Psoas muscle (tissue), 8 donors: ENCODE measurements at regions of chrX and their contacts with region 1.

Region 1: GRCh38 chrX:72126539-72127140 is 5.1 kb downstream of the RTL5 start:
- DNase-seq: peak; percentile 83 to 89
- ATAC-seq: peak; percentile 88 to 93 (median 90)
- H3K4me3 ChIP-seq: no peak overlapping the region
- H3K27ac ChIP-seq: peak overlapping the region; percentile 41
- H3K4me1 ChIP-seq: peaks cover 3% of the 10 kb centered on the region
- H3K27me3 ChIP-seq: peaks cover 0 to 48% (median 0%) of the 10 kb centered on the region in 3 donors
- CTCF ChIP-seq: peak; percentile 80

Region 2: DNA sequence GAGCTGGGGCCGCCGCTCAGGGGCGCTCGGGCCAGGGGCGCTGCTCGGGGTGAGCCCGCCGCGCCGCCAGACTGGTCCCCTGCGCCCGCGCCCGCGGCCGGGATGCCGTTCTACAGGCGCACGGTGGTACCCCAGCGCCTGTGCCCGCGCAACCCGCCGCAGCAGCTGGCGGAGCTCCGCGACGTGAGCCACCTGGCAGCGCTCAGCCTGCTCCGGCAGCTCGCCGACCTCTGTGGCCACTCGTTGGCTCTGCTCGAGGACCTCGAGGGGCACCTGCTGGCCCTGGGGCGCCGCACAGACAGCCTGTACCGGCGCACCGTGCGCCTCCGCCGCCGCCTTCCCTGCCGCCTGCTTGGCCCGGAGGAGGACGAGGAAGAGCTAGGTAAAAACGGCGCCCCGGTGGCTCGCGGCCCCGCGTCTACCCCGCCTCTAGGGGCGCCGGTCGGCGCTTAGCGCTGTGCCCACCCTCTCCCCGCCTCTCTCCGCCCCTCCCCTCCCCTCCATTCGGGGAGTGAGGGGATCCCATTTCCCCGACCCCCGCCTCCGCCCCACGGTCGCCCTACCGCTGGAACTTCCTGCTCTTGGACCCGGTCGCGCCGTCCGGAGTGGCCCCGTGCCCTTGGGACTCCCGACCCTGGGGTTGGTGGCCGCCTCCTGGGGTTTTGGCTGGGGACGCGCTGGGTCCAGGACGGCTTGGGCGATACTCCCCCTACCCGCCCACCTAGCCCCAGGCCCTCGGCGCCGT is 215.5 kb before region 1 on chrX:
- intact Hi-C with region 1: loop called in 1 of 2 experiments (anchors 2 kb)
- DNase-seq: peak in 1 of 2 donors; percentile 21
- ATAC-seq: peak; percentile 37 to 83 (median 61)
- H3K4me3 ChIP-seq: peak overlapping the region; percentile 55
- H3K27ac ChIP-seq: no peak overlapping the region
- H3K4me1 ChIP-seq: no peaks in the 10 kb centered on the region
- H3K27me3 ChIP-seq: peaks cover 0 to 51% (median 0%) of the 10 kb centered on the region in 3 donors
- CTCF ChIP-seq: peak; percentile 16

Region 3: DNA sequence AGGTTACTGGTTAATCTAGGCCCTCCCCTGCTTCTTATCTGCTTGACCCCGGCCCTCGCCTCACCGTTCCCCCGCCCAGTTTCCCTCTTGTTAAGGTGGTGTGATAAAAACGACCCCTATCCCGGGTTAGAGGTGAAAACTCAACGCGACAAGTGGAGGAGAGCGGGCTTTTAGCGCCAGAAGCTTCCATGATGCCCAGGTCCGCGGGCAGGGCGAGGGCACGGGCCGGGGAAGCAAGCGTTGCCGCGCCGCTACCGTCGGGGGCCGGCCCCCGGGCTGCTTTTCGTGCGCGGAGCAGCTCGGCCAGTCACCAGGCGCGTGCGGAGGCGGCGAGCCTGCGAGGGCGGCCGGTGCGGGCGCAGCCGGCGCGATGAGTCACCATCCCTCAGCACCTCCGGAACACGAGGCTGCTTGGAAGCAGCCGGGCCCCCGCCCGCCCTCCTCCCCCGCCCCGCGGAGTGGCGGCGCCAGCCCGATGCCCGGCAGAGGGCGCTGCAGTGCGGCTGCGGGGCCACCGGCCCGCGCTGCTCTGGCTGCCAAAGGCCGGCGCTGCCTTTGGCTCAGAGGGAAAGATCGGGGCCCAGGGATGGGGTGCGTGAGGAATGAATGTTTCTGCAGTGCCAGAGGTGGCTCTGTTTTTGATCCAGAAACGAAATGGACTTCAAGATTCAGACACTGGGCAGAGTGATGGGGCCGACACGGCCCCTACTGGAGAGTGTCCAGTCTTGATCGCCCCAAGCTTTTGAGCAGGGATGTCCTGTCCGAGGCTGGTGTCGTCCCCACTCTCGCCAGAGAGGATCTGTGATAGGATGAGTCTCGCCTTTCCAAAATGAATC is 108.1 kb before region 1 on chrX:
- intact Hi-C with region 1: loop called (anchors 1 to 5 kb)
- DNase-seq: peak; percentile 87 to 93
- ATAC-seq: peak; percentile 99 to 100 (median 99)
- H3K4me3 ChIP-seq: peak overlapping the region; percentile 46
- H3K27ac ChIP-seq: peak overlapping the region; percentile 50
- H3K4me1 ChIP-seq: no peaks in the 10 kb centered on the region
- H3K27me3 ChIP-seq: peaks cover 0 to 64% (median 0%) of the 10 kb centered on the region in 3 donors
- CTCF ChIP-seq: peak; percentile 75